ENCODE measurements at regions of chr15 and their contacts with region 1.

Region 1: DNA sequence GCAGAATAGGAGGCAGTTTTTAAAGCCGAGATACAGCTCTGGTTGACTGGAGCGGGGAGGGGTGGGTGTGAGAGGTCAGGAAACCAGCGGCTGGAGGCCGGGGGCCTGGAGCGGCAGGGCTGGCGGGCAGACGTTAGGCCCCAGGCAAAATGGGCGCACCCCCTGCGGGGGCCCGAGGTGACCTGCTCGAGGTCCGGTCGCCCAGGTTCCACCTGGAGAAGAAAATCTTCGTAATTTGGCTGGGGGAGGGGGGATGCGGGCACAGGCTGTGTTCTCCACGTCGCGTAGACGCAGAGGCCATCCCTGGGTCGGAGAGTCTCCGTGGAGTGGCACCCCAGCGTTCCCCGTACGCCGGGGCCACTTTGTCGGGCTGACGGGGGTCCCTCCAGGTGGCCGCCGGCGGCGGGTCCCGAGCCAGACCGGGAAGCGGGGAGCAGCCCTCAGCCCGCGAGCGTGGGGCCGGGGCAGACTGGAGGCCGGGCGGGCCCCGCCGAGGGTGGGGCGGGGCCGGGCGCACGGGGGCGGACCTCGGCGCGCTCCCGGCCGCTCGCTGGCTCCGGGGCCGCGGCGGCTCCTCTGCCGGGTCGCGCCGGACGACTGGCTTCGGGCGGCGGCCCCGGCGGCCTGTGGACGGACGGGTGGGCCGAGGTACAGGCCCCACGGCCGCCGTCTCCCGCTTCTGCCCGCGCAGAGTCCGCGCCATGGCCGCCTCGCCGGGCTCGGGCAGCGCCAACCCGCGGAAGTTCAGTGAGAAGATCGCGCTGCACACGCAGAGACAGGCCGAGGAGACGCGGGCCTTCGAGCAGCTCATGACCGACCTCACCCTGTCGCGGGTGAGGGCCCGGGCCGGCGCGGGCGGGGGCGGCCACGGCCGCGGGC is at the start of gene CRTC3:
- DNase-seq: peak; percentile 85
- ATAC-seq: peak; percentile 93
- total RNA-seq, gene CRTC3: 25.8 TPM

Region 2: GRCh38 chr15:90560229-90560776 is 30.7 kb after region 1 on chr15:
- intact Hi-C with region 1: loop called (anchors 2 kb)
- DNase-seq: no peak
- ATAC-seq: peak; percentile 73

Region 3: GRCh38 chr15:90598031-90598577 is 68.5 kb after region 1 on chr15:
- intact Hi-C with region 1: loop called (anchors 5 kb)
- DNase-seq: peak; percentile 65
- ATAC-seq: peak; percentile 52